ENCODE measurements at regions of chr12 and their contacts with region 1.

Region 1: DNA sequence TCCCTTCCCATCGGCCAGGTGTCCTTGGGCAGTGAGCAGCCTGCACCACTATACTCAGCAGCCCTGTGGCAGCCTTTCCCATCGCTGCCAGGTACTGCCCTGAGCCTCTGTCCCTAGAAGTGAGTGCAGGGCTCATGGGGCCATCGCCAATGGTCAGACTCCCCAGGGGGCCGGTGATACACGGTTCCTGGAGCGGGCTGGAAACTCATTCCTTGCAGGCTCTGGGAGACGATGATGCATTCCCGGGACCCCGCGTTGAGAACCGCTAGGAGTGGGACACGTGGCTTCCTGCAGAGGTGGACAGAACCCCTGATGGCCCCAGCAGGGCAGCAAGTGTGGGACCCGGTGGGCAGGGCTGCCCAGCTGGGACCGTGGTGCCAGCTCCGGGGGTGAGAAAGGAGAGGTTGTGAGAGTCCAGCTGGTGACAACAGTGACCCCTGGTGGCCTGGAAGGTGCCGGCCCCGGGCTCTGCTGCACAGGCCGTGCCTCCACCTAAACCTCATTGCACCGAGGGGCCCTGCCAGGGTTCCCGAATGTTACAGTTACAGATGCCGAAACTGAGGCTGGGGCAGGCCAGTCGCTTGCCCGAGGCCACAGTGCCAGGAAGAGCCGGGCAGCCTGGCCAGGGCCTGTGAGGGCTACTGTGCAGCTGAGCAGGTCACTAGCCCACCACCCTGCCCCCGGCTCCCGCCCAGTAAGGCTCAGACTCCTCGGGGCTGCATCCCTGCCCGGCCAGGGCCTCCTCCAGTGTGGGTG is 33.8 kb downstream of the FBRSL1 start:
- DNase-seq: no peak
- H3K4me3 ChIP-seq: no peak overlapping the region
- H3K27ac ChIP-seq: no peak overlapping the region
- H3K4me1 ChIP-seq: peaks cover 0 to 14% (median 4%) of the 10 kb centered on the region in 4 donors
- H3K27me3 ChIP-seq: no peaks in the 10 kb centered on the region
- CTCF ChIP-seq: peak; percentile 22 to 73 (median 48)
- EP300 ChIP-seq: no peak
- POLR2A ChIP-seq: no peak

Region 2: DNA sequence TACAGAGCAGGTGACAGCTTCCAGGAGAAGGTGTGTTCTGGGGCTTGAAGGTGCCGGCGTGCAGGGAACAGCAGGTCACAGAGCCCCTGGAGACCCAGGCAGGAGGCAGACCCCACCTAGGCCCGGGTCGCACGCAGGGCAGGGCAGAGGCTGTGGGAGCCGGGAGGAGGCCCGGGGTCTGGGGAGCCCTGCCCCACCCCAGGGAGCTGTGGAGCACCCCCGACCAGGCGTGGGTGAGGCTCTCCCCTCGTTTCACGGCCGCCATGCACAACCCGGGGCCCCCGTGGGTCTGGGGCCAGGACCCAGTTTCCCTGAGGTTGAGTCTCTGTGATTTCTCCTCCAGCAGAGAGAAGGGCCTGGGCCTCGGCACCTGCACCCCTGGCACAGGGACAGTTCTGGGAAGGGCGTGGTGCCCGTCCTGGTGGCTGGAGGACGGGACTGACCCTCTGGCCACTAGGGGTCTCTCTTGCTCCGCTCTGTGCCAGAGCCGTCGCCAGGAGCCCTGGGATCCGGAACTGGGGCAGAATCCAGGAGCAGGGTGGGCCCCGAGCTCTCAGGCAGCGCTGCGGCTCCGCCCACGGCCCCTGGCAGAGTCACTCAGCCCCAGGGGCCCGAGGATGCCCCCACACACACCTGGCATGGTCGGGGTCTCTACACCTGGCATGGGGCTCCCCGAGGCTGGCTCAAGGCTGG is 109.0 kb before region 1 on chr12:
- intact Hi-C with region 1: loop called (anchors 1 kb)
- DNase-seq: peak; percentile 85
- H3K4me3 ChIP-seq: no peak overlapping the region
- H3K27ac ChIP-seq: no peak overlapping the region
- H3K4me1 ChIP-seq: peaks cover 0 to 11% (median 9%) of the 10 kb centered on the region in 4 donors
- H3K27me3 ChIP-seq: peaks cover 6 to 58% (median 46%) of the 10 kb centered on the region in 3 donors
- CTCF ChIP-seq: peak; percentile 76 to 94 (median 80)
- EP300 ChIP-seq: no peak
- POLR2A ChIP-seq: no peak